Endothelial cell of umbilical vein (primary cell): ENCODE measurements at regions of chr2 and their contacts with region 1.

Region 1: GRCh38 chr2:128321784-128322714 is 3.4 kb upstream of the HS6ST1 start:
- DNase-seq: peak; percentile 84
- H3K4me3 ChIP-seq: peak overlapping the region; percentile 45 to 51 (median 46)
- H3K27ac ChIP-seq: peak overlapping the region; percentile 48
- H3K4me1 ChIP-seq: peaks cover 10% of the 10 kb centered on the region
- H3K27me3 ChIP-seq: no peaks in the 10 kb centered on the region
- CTCF ChIP-seq: peak; percentile 73 to 99
- POLR2A ChIP-seq: peak; percentile 71

Region 2: DNA sequence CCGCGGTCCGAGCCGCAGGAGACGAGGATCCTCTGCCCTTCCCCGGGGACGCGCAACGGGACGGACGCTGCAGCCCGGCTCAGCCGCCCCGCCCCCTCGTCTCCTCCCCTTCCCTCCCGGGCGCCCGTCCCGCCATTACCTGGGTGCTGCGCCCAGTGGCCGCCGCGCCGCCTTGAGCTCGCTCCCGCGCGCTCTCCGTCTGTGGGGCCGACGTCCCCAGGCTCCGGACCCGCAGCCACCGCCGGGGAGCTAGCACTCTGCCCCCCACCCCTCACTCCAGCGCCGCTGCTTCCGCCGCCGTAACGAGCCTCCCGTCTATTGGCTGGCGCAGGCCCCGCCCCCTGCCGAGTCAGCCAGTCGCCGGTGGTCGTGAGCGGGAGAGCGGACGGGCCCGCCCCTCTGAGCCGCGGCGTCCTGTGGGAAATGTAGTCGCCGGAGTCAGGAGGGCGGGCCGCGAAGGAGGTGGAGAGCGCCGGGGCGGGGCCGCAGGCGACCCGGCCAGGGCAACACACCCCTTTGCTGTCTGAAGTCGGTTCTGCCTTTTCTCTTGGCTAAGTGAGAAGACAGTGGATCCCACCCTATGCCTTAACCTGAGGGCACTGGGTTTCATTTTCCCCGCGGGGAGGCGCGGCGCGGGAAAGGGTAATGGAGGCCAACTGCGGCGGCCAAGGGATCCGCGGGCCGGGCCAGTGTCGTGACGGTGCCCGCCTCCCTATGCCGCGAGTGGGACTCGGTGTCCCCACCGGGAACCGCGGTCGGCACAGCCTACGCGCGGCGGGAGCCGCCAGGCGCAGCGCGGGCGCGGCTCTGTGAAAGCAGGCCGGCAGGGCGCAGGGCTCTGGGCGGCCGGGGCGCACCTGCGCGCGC is 294.0 kb before region 1 on chr2 and contains the start of gene SAP130:
- CTCF ChIA-PET with region 1: no interaction called
- POLR2A ChIA-PET with region 1: no interaction called
- dilution Hi-C with region 1: no loop called
- intact Hi-C with region 1: no loop called
- DNase-seq: peak; percentile 96
- H3K4me3 ChIP-seq: peak within 1 kb of the TSS; percentile 89 to 96 (median 91)
- H3K27ac ChIP-seq: peak within 1 kb of the TSS; percentile 67
- H3K4me1 ChIP-seq: peaks cover 6% of the 10 kb centered on the region
- H3K27me3 ChIP-seq: no peaks in the 10 kb centered on the region
- CTCF ChIP-seq: no peak
- POLR2A ChIP-seq: no peak
- total RNA-seq, gene SAP130: 30.4 and 34.3 TPM in 2 replicates

Region 3: GRCh38 chr2:128069769-128070168 is 252.3 kb before region 1 on chr2:
- CTCF ChIA-PET with region 1: no interaction called
- POLR2A ChIA-PET with region 1: no interaction called
- dilution Hi-C with region 1: no loop called
- intact Hi-C with region 1: loop called (anchors 10 kb)
- DNase-seq: peak; percentile 55
- H3K4me3 ChIP-seq: no peak overlapping the region
- H3K27ac ChIP-seq: no peak overlapping the region
- H3K4me1 ChIP-seq: no peaks in the 10 kb centered on the region
- H3K27me3 ChIP-seq: peaks cover 0 to 2% of the 10 kb centered on the region in 2 experiments
- CTCF ChIP-seq: no peak
- POLR2A ChIP-seq: no peak

Region 4: DNA sequence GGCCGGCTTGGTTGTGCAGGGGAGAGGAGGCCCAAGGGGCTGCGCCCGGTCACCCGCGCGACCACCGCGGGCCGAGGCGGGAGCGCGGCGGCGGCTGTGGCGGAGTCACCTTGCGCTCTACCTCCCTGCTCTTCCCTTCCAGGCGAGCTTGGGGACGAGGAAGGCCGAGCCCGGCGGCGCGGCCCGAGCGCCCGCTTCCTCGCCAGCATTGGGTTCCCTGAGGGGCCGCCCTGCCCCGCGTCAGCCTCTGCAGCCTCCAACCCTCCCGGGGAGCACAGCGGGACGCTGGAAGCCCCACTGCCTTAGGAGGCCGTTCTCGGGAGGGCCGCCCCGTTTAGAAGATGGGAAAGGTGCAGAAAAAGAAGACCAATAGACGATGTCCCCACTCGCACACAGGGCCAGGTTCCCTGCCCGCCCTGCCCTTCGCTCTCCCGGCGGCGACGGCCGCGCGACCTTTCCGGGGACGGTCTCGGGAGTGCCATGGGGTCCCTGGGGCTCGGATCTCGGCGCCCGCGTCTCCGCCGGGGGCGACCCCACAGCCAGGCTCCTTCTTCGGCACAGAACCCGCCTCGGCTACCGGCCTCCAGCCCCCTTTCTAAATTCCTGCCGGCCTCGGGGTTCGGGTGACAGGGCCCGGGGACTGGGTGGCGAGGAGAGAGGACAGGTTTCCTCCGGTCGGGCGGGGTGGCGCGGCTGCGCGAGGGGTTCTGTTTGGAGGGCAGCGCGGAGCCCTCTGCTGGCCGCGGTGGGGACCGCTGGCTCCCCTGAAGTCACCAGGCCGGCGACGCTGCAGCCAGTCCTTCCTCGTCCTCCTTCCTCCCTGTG is 88.9 kb before region 1 on chr2:
- CTCF ChIA-PET with region 1: no interaction called
- POLR2A ChIA-PET with region 1: no interaction called
- dilution Hi-C with region 1: no loop called
- intact Hi-C with region 1: loop called (anchors 2 kb)
- DNase-seq: peak; percentile 72
- H3K4me3 ChIP-seq: peak overlapping the region; percentile 52 to 70 (median 57)
- H3K27ac ChIP-seq: no peak overlapping the region
- H3K4me1 ChIP-seq: peaks cover 13% of the 10 kb centered on the region
- H3K27me3 ChIP-seq: no peaks in the 10 kb centered on the region
- CTCF ChIP-seq: peak; percentile 83 to 98
- POLR2A ChIP-seq: no peak

Region 5: DNA sequence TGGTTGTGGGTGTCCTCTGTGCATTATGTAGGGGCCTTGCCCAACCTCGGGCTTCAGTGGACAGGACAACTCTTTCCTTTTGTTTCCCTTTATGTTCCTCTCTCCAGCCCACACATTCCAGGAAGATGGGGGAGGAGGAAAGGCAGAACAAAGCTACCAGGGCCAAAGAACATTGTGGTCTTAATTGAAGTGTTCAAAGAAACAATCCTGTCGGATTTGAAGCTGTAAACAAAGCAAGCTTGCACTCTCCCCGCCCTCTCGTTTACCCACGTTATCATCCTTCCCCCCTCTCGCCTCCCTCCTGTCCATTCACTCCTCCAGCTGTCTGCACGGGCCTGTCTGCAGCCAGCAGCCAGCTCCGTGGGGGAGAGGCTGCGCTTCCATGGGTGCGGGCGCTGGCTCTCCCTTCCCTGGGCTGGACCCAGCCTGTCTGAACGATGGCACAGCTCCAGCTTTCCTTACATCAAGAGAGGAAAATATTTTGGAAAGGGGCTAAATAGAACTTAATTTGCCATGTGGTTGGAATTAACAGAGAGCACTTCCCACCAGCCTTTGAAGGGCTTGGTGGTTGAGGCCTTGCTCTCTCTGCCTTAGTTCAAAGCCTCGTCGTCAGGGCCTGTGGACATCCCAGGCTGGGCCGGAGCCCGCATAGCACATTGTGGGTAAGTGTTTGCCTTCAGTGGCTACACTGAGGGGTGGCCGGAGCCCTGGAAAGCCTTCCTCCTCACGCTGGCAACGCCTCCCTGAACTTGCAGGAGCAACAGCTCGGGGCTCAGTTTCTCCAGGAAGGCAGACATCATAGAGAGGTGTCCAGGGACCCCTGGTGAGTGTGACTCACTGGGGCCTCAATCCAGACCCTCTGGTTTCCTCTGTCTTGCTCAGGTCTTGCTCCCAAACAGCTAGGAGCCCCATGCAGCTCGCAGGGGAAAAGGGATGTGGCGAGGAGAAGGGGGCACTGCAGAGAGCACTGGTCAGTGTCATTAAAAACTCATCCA is 57.3 kb after region 1 on chr2:
- CTCF ChIA-PET with region 1: no interaction called
- POLR2A ChIA-PET with region 1: no interaction called
- dilution Hi-C with region 1: no loop called
- intact Hi-C with region 1: no loop called
- DNase-seq: peak; percentile 48
- H3K4me3 ChIP-seq: no peak overlapping the region
- H3K27ac ChIP-seq: no peak overlapping the region
- H3K4me1 ChIP-seq: no peaks in the 10 kb centered on the region
- H3K27me3 ChIP-seq: peaks cover 0 to 3% of the 10 kb centered on the region in 2 experiments
- CTCF ChIP-seq: no peak
- POLR2A ChIP-seq: no peak

Region 6: DNA sequence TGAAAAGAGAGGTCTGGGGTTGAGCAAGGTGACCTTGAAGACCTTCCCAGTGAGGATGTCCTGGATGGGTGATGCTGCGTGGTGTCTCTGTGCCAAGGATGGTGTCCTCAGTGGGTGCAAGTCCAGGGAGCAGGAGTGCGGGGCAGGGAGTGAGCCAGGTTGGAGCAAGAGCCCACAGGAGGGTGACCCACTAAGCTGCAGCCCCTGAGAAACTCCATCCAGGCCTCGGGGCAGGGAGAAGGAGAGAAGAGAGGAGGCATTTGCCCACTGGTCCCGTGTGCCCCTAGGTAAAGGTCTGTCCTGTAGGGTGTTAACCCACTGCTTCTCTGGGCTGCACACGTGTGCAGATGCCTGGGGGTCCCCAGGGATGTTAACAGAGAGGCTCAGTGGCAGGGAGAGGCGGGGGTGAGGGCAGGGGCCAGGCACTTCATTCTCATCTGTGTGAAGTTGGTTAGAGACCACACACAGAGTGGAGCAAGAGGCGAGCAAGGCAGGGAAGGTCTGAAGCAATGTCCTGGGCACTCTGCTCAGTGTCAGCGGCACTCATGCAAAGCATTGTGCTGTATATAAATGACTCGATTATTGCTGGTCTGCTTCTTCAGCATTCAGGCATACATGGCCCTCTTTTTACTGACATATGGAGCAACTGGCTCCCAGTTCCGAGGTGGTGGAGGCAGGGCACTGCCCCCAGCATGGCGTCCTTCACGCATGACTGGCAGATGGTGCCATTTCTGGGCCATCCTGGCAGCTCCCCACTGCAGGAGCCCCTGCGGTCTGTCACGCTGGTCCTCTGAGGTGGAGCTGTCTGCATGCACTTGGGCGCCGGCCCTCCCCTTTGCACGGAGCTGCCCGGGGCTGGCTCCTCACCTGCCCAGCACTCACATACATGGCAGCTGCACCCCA is 113.8 kb after region 1 on chr2:
- CTCF ChIA-PET with region 1: no interaction called
- POLR2A ChIA-PET with region 1: no interaction called
- dilution Hi-C with region 1: no loop called
- intact Hi-C with region 1: no loop called
- DNase-seq: no peak
- H3K4me3 ChIP-seq: no peak overlapping the region
- H3K27ac ChIP-seq: no peak overlapping the region
- H3K4me1 ChIP-seq: no peaks in the 10 kb centered on the region
- H3K27me3 ChIP-seq: peaks cover 0 to 13% of the 10 kb centered on the region in 2 experiments
- CTCF ChIP-seq: no peak
- POLR2A ChIP-seq: no peak

Region 7: GRCh38 chr2:128531856-128532255 is 209.8 kb after region 1 on chr2:
- CTCF ChIA-PET with region 1: no interaction called
- POLR2A ChIA-PET with region 1: no interaction called
- dilution Hi-C with region 1: no loop called
- intact Hi-C with region 1: loop called (anchors 5 kb)
- DNase-seq: peak; percentile 21
- H3K4me3 ChIP-seq: no peak overlapping the region
- H3K27ac ChIP-seq: no peak overlapping the region
- H3K4me1 ChIP-seq: no peaks in the 10 kb centered on the region
- H3K27me3 ChIP-seq: no peaks in the 10 kb centered on the region
- CTCF ChIP-seq: no peak
- POLR2A ChIP-seq: no peak

Region 8: DNA sequence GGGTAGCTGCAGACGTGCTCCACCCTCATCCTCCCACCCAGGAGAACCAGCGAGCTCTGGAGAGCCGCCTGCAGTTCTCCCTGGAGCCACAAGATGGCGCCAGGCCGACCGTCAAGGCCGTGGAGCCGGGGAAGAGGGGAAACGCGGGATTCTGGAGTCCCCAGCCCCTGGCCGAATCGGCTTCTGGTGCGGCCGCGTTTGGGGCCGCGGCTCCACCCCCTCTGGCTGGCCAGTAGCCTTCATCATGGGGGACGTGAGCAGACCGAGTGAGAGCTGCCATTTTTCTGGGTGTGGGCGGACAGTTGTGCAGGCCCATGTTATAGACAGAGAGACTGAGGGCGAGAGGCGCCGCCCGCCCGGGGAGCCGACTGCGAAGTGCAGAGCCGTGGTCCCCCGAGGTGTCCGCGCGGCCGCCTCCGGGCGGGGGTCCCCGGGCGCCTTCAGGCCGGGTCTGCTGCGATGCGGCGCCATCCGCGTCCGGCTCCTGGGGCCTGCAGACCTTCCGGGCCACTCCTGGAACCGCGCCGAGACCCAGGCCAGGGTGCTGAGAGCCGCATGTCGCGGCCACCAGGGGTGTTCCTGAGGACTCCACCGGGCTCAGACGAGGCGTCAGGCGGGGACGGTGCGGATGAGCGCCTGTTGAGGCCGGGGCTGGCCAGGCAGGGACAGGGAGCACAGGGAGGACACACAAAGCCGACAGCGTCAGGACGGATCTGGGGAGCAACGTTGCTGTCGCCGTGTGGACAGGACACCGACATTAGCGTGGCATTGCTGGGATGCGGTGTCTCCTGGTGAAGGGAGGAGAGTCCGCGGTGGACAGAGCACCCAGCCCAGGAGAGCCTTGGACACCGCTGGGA is 414.9 kb after region 1 on chr2:
- CTCF ChIA-PET with region 1: interaction called, 5 read pairs
- POLR2A ChIA-PET with region 1: no interaction called
- dilution Hi-C with region 1: no loop called
- intact Hi-C with region 1: loop called (anchors 5 kb)
- DNase-seq: peak; percentile 50
- H3K4me3 ChIP-seq: peak overlapping the region in 1 of 3 experiments; percentile 14
- H3K27ac ChIP-seq: no peak overlapping the region
- H3K4me1 ChIP-seq: peaks cover 3% of the 10 kb centered on the region
- H3K27me3 ChIP-seq: no peaks in the 10 kb centered on the region
- CTCF ChIP-seq: peak; percentile 94 to 99
- POLR2A ChIP-seq: no peak

Region 9: GRCh38 chr2:129849559-129850160 is 1527.6 kb after region 1 on chr2:
- CTCF ChIA-PET with region 1: interaction called, 3 read pairs
- POLR2A ChIA-PET with region 1: no interaction called
- dilution Hi-C with region 1: no loop called
- intact Hi-C with region 1: loop called (anchors 1 kb)
- DNase-seq: peak; percentile 74
- H3K4me3 ChIP-seq: no peak overlapping the region
- H3K27ac ChIP-seq: no peak overlapping the region
- H3K4me1 ChIP-seq: peaks cover 2% of the 10 kb centered on the region
- H3K27me3 ChIP-seq: no peaks in the 10 kb centered on the region
- CTCF ChIP-seq: peak; percentile 37 to 38
- POLR2A ChIP-seq: no peak